ENCODE measurements at regions of chr11 and their contacts with region 1.

Region 1: DNA sequence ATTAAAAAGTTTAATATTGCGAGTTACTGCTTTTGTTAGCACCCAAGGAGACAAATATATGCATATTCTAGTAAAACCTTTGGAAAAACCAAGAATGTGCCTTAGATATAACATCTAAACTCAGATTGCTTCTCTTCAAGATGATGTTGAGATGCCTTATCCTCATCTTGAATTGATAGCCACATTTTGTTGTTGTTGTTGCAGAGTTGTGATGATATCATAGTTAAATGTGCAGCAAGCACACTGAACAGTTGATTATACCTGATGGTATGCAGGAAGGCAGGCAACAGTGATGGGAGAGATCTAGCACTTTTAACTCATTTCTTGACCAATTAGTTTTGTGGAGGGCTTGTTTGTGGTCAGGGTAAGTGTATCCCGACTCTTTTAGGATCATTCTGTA is 48.0 kb downstream of the KDM2A start:
- DNase-seq: no peak

Region 2: GRCh38 chr11:66967670-66968425 is 199.2 kb before region 1 on chr11:
- intact Hi-C with region 1: no loop called
- DNase-seq: no peak

Region 3: DNA sequence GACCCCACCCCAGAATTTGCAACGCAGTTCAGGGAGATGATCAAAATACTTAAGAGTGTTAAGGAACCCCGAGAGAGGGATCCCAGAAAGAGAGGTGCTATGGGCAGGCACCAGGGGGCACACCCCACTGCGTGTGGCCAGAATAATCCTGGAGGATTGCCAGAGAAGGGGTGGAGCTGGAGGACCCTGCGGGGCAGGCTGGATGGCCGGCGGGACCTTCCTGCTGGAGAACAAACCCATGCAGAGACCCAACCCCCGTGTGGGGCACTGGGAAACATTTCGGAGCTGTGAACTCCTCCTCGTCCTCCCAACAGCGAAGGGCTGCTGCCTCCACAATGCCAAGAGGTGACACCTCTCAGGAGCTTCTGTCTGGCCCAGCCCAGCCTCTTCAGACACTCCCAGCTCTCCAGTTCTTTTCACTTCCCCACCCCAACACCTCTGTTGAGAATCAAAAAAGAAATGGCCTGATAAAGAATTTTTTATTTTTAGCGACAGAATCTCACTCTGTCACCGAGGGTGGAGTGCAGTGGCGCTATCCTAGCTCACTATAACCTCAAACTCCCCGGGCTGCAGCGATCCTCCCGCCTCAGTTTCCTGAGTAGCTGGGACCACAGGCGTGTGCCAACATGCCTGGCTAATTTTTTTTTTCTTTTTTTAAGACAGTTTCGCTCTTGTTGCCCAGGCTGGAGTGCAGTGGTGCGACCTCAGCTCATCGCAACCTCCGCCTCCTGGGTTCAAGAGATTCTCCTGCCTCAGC is 84.9 kb before region 1 on chr11:
- intact Hi-C with region 1: loop called (anchors 5 kb)
- DNase-seq: no peak